Colonic mucosa (tissue), 4 donors: ENCODE measurements at regions of chr14 and their contacts with region 1.

Region 1: DNA sequence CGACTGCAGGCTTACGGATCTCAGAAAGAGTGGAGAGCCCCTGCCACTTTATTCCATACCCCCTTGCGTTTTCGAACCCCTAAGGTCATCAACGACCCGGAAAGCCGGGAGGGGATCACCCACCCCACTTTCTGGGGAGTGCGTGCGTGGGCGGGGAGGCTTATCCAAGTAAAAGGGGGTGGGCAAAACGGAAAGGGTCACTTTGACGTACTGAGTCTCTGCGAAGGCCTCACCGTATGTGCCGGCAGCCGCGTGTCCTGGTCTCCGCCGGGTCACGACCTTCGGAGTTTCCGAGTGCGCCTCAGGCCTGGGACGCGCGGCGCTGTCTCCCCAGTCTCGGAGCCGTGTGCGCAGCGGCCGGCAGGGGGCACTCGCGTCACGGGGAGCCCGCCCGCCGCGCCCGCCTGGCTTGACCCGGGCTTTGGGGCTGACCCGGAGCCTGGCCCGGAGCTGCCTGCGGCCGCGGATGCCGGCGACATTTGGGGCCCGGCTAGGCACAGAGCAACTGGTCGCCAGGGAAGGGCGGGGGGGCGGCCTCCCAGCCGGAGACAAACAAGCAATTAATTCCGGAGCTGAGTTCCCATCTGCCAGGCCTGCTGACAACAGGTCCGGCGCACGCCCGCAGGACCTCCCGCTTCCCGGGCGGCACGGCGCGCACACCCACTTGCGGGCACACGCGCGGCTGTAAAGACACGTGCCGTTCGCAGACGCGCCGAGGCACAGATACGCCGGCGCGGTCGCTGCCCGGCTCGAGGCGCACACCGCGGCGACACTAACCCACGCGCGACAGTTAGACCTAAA is 890 bp upstream of the KIF26A start:
- DNase-seq: peak; percentile 74
- H3K4me3 ChIP-seq: peak overlapping the region; percentile 37
- H3K27ac ChIP-seq: no peak overlapping the region
- H3K4me1 ChIP-seq: peaks cover 6% of the 10 kb centered on the region
- H3K27me3 ChIP-seq: peaks cover 37% of the 10 kb centered on the region
- CTCF ChIP-seq: peak; percentile 88

Region 2: DNA sequence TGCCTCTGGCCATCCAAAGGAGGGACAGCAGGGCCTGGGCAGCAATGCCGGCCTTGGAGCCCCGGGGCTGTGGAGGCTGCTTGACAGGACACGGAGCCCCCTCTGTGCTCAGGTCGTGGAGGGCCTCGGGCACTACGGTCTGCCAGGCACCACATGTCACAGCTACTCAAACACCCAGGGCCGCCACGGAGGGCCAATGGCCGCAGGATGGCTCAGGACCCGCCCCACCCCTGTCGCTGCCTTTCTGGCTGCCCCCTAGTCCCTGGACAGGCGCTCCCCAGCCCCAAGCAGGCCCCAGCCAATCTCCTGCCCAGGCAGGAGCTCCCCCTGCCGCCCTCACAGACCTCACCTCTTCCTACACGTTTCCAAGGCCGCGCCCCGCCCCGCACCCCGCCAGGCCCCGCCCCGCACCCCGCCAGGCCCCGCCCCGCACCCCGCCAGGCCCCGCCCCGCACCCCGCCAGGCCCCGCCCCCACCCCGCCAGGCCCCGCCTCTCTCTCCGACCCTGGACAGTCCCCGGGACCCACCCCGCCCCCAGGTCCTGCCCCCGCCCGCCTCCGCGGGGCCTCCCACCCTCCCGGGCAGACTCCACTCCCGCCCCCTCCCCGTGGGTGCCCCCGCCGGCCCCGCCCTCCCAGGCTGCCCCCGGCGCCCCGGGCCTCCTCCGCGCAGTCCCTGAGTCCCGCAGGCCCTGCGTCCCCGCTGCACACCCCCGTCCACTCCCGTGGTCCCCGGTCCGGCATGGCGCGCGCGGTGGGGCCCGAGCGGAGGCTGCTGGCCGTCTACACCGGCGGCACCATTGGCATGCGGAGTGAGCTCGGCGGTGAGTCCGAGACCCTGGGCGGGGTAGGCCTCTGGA is 52.2 kb before region 1 on chr14 and contains the start of gene ASPG:
- intact Hi-C with region 1: no loop called
- DNase-seq: peak; percentile 68
- H3K4me3 ChIP-seq: no peak within 1 kb of the TSS
- H3K27ac ChIP-seq: no peak within 1 kb of the TSS
- H3K4me1 ChIP-seq: peaks cover 49% of the 10 kb centered on the region
- H3K27me3 ChIP-seq: peaks cover 7% of the 10 kb centered on the region
- CTCF ChIP-seq: no peak
- total RNA-seq, gene ASPG: 1.4 to 7.5 TPM

Region 3: GRCh38 chr14:104267895-104268294 is 130.4 kb after region 1 on chr14:
- intact Hi-C with region 1: no loop called
- DNase-seq: peak; percentile 20
- H3K4me3 ChIP-seq: no peak overlapping the region
- H3K27ac ChIP-seq: no peak overlapping the region
- H3K4me1 ChIP-seq: no peaks in the 10 kb centered on the region
- H3K27me3 ChIP-seq: no peaks in the 10 kb centered on the region
- CTCF ChIP-seq: no peak

Region 4: GRCh38 chr14:104283197-104284106 is 146.0 kb after region 1 on chr14:
- intact Hi-C with region 1: no loop called
- DNase-seq: peak; percentile 84
- H3K4me3 ChIP-seq: no peak overlapping the region
- H3K27ac ChIP-seq: peak overlapping the region; percentile 78
- H3K4me1 ChIP-seq: peaks cover 19% of the 10 kb centered on the region
- H3K27me3 ChIP-seq: no peaks in the 10 kb centered on the region
- CTCF ChIP-seq: no peak

Region 5: DNA sequence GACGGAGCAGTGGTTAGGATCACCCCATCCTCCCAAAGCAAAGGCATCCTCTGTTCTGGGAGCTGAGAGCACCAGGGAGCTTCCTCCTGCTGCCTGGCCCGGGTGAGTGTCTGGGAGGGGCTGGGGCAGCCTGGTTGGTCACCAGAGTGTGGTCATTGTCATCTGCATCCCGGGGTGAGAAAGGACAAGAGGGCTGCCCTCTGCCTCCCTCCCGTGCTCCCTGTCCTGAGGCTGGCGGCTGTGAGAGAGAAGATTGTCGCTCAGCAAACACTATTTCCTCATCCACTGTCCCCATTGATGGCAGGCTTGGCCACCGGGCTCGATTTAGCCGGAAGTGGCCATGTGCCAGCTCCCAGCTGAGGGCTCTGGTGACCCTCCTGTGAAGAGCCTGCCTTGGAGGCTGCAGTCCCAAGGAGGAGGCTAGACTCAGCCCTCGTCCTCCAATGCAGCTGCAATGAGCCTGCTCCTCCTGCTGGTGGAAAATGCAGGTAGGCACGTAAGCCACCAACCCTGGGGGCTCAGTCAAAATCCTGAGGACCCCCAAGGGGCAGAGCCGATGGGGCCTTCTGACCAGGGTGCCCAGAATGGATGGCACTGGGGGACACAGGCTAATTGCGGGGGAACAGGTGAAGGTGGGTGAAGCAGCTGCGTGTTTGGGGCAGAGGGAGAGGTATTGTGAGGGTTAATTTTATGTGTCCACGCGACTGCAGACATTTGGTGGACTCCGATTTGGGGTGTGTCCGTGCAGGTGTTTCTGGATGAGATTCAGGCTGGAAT is 156.5 kb after region 1 on chr14:
- intact Hi-C with region 1: loop called (anchors 5 kb)
- DNase-seq: peak; percentile 68
- H3K4me3 ChIP-seq: no peak overlapping the region
- H3K27ac ChIP-seq: no peak overlapping the region
- H3K4me1 ChIP-seq: peaks cover 8% of the 10 kb centered on the region
- H3K27me3 ChIP-seq: no peaks in the 10 kb centered on the region
- CTCF ChIP-seq: peak; percentile 51

Region 6: GRCh38 chr14:104341532-104342434 is 204.3 kb after region 1 on chr14:
- intact Hi-C with region 1: loop called (anchors 10 kb)
- DNase-seq: peak; percentile 83
- H3K4me3 ChIP-seq: no peak overlapping the region
- H3K27ac ChIP-seq: no peak overlapping the region
- H3K4me1 ChIP-seq: peaks cover 7% of the 10 kb centered on the region
- H3K27me3 ChIP-seq: no peaks in the 10 kb centered on the region
- CTCF ChIP-seq: peak; percentile 75

Region 7: GRCh38 chr14:104563742-104564615 is 426.5 kb after region 1 on chr14:
- intact Hi-C with region 1: loop called (anchors 2 kb)
- DNase-seq: peak; percentile 70
- H3K4me3 ChIP-seq: no peak overlapping the region
- H3K27ac ChIP-seq: no peak overlapping the region
- H3K4me1 ChIP-seq: no peaks in the 10 kb centered on the region
- H3K27me3 ChIP-seq: no peaks in the 10 kb centered on the region
- CTCF ChIP-seq: peak; percentile 59

Region 8: DNA sequence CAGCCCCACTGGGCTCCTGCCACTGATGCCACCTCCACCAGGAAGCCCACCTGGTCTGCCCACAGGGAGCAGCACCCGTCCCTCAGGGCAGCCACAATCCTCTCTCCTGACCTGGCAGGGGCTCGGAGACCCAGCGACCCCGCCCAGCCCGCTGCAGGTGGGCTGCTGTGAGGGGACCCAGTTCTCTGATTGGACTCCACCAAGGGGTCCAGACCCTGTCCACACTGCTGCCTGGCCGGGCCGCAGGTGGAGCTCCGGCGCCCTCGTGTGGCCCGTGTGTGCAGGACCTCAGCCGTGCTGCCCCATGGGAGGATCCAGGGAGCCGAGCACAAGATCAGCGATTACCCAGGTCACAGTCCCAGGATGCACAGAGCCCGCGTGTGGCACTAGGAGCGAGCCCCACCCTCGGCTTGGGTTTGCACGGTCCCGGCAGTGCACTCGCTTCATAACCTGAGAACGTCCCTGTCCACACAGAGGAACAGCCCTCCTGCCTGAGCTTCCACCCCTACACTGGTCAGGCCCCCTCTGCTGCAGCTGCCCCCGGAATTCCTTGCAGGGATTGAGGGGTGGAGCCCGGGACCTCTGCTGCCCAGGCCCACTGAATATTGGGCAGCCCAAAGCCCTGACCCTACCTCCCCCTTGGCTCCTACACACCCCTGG is 502.5 kb after region 1 on chr14:
- intact Hi-C with region 1: loop called (anchors 5 kb)
- DNase-seq: peak; percentile 57
- H3K4me3 ChIP-seq: no peak overlapping the region
- H3K27ac ChIP-seq: no peak overlapping the region
- H3K4me1 ChIP-seq: no peaks in the 10 kb centered on the region
- H3K27me3 ChIP-seq: no peaks in the 10 kb centered on the region
- CTCF ChIP-seq: peak; percentile 88